ENCODE measurements at regions of chr17 and their contacts with region 1.

Region 1: DNA sequence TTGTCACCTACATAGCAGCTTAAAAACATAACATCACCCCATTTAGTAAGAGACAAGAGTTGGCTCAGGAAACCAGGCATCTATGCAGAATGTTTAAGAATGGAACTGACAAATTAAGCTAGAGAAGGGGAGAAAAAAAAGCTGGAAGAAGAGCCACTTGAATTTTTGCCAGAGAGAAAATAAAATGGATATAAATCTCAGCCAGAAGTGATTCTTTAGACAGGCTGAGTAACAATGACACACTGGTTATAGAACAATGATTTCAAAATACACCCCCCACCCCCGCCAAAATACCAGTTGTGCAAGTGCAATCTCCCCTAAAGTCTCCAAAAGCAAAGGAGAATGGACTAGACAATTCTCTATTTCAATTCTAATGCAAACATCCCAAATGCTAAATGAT is 22.4 kb downstream of the LSM12 start:
- DNase-seq: no peak
- ATAC-seq: no peak
- H3K4me3 ChIP-seq: no peak overlapping the region
- H3K27ac ChIP-seq: no peak overlapping the region
- H3K4me1 ChIP-seq: no peaks in the 10 kb centered on the region
- H3K27me3 ChIP-seq: no peaks in the 10 kb centered on the region
- CTCF ChIP-seq: no peak
- EP300 ChIP-seq: no peak
- POLR2A ChIP-seq: no peak
- RAD21 ChIP-seq: no peak

Region 2: DNA sequence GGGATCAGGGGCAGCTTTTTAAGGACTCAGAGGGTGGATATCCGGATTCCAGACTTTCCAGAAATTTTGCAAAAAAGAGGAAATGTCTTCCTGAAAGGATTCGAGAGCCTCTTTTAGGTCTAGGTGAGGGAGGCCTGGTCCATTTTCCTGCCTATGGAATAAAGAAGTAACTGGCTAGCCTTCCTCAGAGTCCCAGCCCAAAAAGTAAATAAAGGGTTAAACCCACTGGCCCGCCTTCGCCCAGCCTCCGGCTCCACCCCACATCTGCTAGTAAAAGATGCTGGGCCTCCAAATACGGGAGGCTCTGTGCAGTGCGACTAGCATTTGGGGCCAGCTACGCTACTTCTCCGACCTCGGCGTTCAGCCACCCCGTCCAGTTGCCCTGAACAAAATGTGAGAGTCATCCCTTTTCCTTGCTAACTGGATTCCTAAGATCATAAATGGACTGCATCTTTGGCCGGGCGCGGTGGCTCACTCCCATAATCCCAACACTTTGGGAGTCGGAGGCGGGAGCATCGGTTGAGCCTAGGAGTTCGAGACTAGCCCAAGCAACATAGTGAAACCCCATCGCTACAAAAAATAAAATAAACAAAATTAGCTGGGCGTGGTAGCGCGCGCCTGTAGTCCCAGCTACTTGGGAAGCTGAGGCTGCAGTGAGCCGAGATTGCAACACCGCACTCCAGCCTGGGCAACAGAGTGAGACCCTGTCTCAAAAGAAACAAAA is 135.9 kb before region 1 on chr17:
- CTCF ChIA-PET with region 1: interaction called, 22 read pairs
- POLR2A ChIA-PET with region 1: no interaction called
- RAD21 ChIA-PET with region 1: interaction called, 3 read pairs
- SMC1A ChIA-PET with region 1: no interaction called
- in situ Hi-C with region 1: no loop called
- intact Hi-C with region 1: no loop called
- DNase-seq: no peak
- ATAC-seq: peak; percentile 50
- H3K4me3 ChIP-seq: no peak overlapping the region
- H3K27ac ChIP-seq: no peak overlapping the region
- H3K4me1 ChIP-seq: no peaks in the 10 kb centered on the region
- H3K27me3 ChIP-seq: peaks cover 10 to 18% of the 10 kb centered on the region in 2 experiments
- CTCF ChIP-seq: no peak
- EP300 ChIP-seq: no peak
- POLR2A ChIP-seq: no peak
- RAD21 ChIP-seq: no peak

Region 3: GRCh38 chr17:43940630-43941029 is 103.4 kb before region 1 on chr17:
- CTCF ChIA-PET with region 1: interaction called, 42 read pairs
- POLR2A ChIA-PET with region 1: no interaction called
- RAD21 ChIA-PET with region 1: interaction called, 26 read pairs
- SMC1A ChIA-PET with region 1: interaction called, 20 read pairs
- in situ Hi-C with region 1: loop called (anchors 5 kb)
- intact Hi-C with region 1: loop called (anchors 1 kb)
- DNase-seq: no peak
- ATAC-seq: peak; percentile 50
- H3K4me3 ChIP-seq: no peak overlapping the region
- H3K27ac ChIP-seq: no peak overlapping the region
- H3K4me1 ChIP-seq: no peaks in the 10 kb centered on the region
- H3K27me3 ChIP-seq: no peaks in the 10 kb centered on the region; a peak in 1 of 4 replicates
- CTCF ChIP-seq: peak; percentile 37 to 59 (median 43); a peak in 5 of 6 replicates
- EP300 ChIP-seq: no peak
- POLR2A ChIP-seq: no peak
- RAD21 ChIP-seq: peak; percentile 41

Region 4: DNA sequence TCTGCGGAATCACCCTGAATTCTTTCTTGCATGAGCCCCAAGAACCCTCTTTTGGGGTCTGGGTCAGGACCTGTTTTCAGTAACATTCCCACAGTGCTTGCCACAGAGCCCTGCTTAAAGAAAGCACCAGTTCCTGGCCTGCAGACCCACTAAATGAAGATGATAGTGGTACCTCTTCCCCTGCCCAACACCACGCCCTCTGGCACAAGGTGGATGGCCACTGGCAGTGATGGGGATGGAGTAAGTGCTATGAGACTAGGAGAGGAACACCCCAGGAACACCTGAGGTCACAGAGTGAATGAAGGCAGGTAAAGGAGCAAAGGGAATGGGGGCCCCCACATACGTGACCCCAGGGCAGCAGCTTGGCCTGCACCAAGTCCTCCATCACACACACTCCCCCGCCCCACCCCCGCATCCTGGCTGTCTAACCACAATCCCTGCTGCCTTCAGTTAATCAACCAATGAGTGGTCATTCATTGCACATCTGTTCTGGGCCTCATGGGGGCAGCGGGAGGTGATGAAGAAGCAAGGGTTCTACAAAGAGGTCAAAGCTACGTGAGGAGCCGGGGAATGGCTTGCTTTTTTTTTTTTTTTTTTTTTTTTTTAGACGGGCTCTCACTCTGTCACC is 97.9 kb before region 1 on chr17:
- CTCF ChIA-PET with region 1: interaction called, 42 read pairs
- POLR2A ChIA-PET with region 1: interaction called, 4 read pairs
- RAD21 ChIA-PET with region 1: interaction called, 26 read pairs
- SMC1A ChIA-PET with region 1: interaction called, 20 read pairs
- in situ Hi-C with region 1: loop called (anchors 5 kb)
- intact Hi-C with region 1: loop called (anchors 1 kb)
- DNase-seq: no peak
- ATAC-seq: no peak
- H3K4me3 ChIP-seq: no peak overlapping the region
- H3K27ac ChIP-seq: no peak overlapping the region
- H3K4me1 ChIP-seq: 0 out of 2 replicates have a peak, but pooled peaks cover 4% of the 10 kb centered on the region
- H3K27me3 ChIP-seq: peaks cover 0 to 2% of the 10 kb centered on the region in 2 experiments; a peak in 1 of 4 replicates
- CTCF ChIP-seq: no peak
- EP300 ChIP-seq: no peak
- POLR2A ChIP-seq: no peak
- RAD21 ChIP-seq: no peak

Region 5: GRCh38 chr17:44006598-44007345 is 37.3 kb before region 1 on chr17:
- CTCF ChIA-PET with region 1: interaction called, 12 read pairs
- POLR2A ChIA-PET with region 1: no interaction called
- RAD21 ChIA-PET with region 1: interaction called, 4 read pairs
- SMC1A ChIA-PET with region 1: interaction called, 3 read pairs
- in situ Hi-C with region 1: no loop called
- intact Hi-C with region 1: no loop called
- DNase-seq: peak; percentile 73
- ATAC-seq: peak; percentile 93
- H3K4me3 ChIP-seq: peak overlapping the region; percentile 91
- H3K27ac ChIP-seq: no peak overlapping the region
- H3K4me1 ChIP-seq: peaks cover 14% of the 10 kb centered on the region
- H3K27me3 ChIP-seq: peaks cover 10% of the 10 kb centered on the region in 2 experiments
- CTCF ChIP-seq: peak; percentile 40 to 72 (median 53)
- EP300 ChIP-seq: no peak
- POLR2A ChIP-seq: peak; percentile 8; the same call in 1 of the 2 replicates
- RAD21 ChIP-seq: peak; percentile 29; the same call in 1 of the 2 replicates